Activated T-helper 1 cell treated with anti-CD3 and anti-CD28 coated beads, Interleukin-12 subunit alpha, Interleukin-12 subunit beta, Interleukin-2, Interleukin-4 antibody, amounts not matched to agents 30 ng/mL and 10 ng/mL and 1 ng/mL, durations not matched to agents 14 hours and 24 hours and 36 hours (primary cell): ENCODE measurements at regions of chr7 and their contacts with region 1.

Region 1: DNA sequence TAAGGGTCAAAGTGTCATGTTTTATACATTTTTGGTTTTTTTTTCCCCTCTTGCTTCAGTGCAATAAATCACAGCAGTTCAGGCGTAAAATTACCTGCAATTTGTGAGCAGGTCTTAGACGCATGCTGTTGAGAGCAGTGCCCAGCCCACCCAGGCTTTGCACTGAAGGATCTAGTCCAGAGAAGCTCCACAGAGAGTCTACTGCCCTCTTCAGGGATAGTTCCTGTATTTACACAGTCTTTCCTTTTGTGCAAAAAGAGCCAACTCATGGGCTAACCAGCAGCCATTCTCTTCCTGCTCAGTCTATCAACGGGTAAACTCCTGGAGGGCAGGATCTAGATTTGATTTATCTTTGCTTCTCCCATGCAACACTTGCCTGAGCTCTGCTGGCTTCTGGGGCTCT is 82.2 kb upstream of the NAMPT start:
- DNase-seq: no peak
- H3K4me3 Mint-ChIP-seq: no peak overlapping the region
- H3K27ac Mint-ChIP-seq: peak overlapping the region; percentile 35
- H3K4me1 Mint-ChIP-seq: peaks cover 36% of the 10 kb centered on the region
- H3K27me3 Mint-ChIP-seq: no peaks in the 10 kb centered on the region

Region 2: DNA sequence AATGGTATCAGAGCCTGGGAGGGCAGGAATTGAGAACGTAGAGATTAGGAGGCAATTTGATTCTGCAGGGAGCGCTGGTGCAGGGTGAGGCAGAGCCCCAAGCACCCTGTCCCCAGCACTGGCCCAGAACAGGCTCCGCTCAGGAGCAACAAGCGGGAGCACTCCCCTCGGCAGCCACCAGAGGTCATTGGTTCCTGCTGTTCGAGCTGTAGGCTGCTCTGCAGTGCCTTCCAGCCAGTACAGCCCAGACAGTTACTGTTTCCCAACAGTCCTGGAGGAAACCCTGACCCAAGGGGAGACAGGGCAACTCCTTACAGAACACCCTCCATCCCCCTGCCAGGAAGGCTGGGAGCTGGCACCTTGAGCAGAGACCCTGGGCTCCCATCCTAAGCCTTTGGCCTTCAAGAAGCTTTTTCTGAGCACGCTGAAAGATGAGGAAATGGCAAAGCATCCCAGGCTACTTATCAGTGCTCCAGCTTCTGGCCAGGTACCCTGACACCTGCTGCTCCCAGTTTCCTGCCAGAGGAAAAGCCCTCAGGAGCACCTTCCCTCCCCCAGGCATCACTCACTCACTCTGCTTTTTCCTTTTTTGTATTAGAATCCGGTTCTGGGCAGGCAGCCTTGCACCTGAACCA is 714.5 kb before region 1 on chr7:
- intact Hi-C with region 1: no loop called
- DNase-seq: peak; percentile 41
- H3K4me3 Mint-ChIP-seq: no peak overlapping the region
- H3K27ac Mint-ChIP-seq: no peak overlapping the region
- H3K4me1 Mint-ChIP-seq: peaks cover 16% of the 10 kb centered on the region
- H3K27me3 Mint-ChIP-seq: no peaks in the 10 kb centered on the region

Region 3: GRCh38 chr7:106382929-106383328 is 15.9 kb after region 1 on chr7:
- intact Hi-C with region 1: loop called (anchors 2 kb)
- DNase-seq: no peak
- H3K4me3 Mint-ChIP-seq: no peak overlapping the region
- H3K27ac Mint-ChIP-seq: no peak overlapping the region
- H3K4me1 Mint-ChIP-seq: peaks cover 19% of the 10 kb centered on the region
- H3K27me3 Mint-ChIP-seq: peaks cover 3% of the 10 kb centered on the region

Region 4: DNA sequence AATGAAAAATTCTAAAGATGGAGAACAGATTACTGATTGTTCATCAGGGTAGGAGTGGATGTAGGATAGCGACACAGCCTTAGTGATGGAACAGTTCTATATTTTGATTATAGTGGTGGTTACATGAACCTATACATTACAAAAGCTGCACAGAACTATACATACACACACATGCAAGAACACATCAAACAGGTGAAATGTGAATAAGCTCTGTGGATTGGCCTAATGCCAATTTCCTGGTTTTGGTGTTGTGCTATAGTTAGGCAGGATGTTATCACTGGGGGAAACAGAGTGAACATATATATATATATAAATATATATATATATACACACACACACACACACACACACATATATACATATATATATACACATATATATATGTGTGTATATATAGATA is 421.6 kb after region 1 on chr7:
- intact Hi-C with region 1: no loop called
- DNase-seq: no peak
- H3K4me3 Mint-ChIP-seq: no peak overlapping the region
- H3K27ac Mint-ChIP-seq: no peak overlapping the region
- H3K4me1 Mint-ChIP-seq: no peaks in the 10 kb centered on the region
- H3K27me3 Mint-ChIP-seq: peaks cover 3% of the 10 kb centered on the region